ENCODE measurements at regions of chr4 and their contacts with region 1.

Region 1: GRCh38 chr4:176319704-176320339 is at the start of gene SPCS3:
- DNase-seq: peak; percentile 76 to 93
- H3K4me3 ChIP-seq: peak within 1 kb of the TSS; percentile 95
- H3K27ac ChIP-seq: peak within 1 kb of the TSS; percentile 87
- H3K4me1 ChIP-seq: peaks cover 18% of the 10 kb centered on the region
- H3K27me3 ChIP-seq: no peaks in the 10 kb centered on the region
- CTCF ChIP-seq: no peak
- total RNA-seq, gene SPCS3: 107 TPM in 2 replicates

Region 2: GRCh38 chr4:176150356-176150682 is 169.5 kb before region 1 on chr4:
- CTCF ChIA-PET with region 1: no interaction called
- POLR2A ChIA-PET with region 1: no interaction called
- intact Hi-C with region 1: loop called (anchors 5 kb)
- DNase-seq: no peak
- H3K4me3 ChIP-seq: no peak overlapping the region
- H3K27ac ChIP-seq: no peak overlapping the region
- H3K4me1 ChIP-seq: no peaks in the 10 kb centered on the region
- H3K27me3 ChIP-seq: no peaks in the 10 kb centered on the region
- CTCF ChIP-seq: peak; percentile 57

Region 3: GRCh38 chr4:176195184-176195978 is 124.4 kb before region 1 on chr4 and contains the start of gene SPATA4:
- CTCF ChIA-PET with region 1: no interaction called
- POLR2A ChIA-PET with region 1: no interaction called
- intact Hi-C with region 1: loop called (anchors 1 kb)
- DNase-seq: peak; percentile 72 to 90
- H3K4me3 ChIP-seq: peak within 1 kb of the TSS; percentile 69
- H3K27ac ChIP-seq: peak within 1 kb of the TSS; percentile 75
- H3K4me1 ChIP-seq: 0 out of 2 replicates have a peak, but pooled peaks cover 5% of the 10 kb centered on the region
- H3K27me3 ChIP-seq: no peaks in the 10 kb centered on the region
- CTCF ChIP-seq: no peak
- total RNA-seq, gene SPATA4: 0.43 and 1.1 TPM in 2 replicates

Region 4: GRCh38 chr4:176270669-176271068 is 49.2 kb before region 1 on chr4:
- CTCF ChIA-PET with region 1: no interaction called
- POLR2A ChIA-PET with region 1: no interaction called
- intact Hi-C with region 1: loop called (anchors 1 kb)
- DNase-seq: peak; percentile 72 to 93
- H3K4me3 ChIP-seq: no peak overlapping the region
- H3K27ac ChIP-seq: peak overlapping the region; percentile 40
- H3K4me1 ChIP-seq: peaks cover 21% of the 10 kb centered on the region
- H3K27me3 ChIP-seq: no peaks in the 10 kb centered on the region
- CTCF ChIP-seq: no peak

Region 5: DNA sequence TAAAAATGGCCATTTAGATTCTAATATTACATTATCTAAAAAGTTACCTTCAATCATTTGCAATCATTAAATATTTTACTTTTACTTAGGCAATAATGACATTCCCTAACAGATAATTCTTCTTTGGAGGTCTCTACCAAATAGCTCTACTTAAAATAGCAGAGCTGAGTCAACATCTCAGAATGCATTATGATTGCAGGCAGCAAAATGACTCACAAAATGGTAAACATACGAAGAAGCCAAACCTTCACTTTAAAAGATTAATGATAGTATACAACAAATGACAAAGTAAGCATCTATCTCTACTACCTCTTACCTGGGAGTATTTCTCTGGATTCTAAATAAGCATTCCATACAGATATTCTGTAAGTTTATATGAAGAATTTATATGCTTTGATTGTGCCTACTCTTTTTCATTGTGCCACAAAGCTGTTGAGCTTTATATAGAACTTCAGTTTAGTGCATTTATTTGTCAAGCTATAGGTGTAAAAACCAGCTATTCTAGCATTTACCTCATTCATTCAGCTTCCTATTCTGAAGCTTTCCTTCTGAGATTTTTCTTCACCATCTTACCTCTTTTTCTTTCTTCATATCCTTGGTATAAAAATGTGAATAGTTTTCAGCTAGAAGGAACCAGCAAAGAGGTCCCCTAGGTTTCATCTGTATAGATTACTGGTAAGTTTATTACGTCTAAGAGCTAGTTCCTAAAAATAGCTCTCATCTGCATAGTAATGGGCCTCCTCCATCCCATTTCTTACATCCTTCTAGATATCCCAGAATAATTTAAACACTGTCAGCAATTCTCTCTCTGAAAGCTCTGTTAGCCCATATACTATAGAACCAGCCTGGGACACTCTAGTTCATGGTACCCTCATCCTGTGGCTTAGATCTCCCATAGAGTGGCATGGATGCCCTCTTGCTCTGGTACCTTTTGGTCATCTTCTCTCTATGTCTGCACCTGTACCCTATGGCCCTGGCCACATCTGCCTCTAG is 17.2 kb before region 1 on chr4:
- CTCF ChIA-PET with region 1: no interaction called
- POLR2A ChIA-PET with region 1: no interaction called
- intact Hi-C with region 1: no loop called
- DNase-seq: peak in 1 of 2 experiments; percentile 77
- H3K4me3 ChIP-seq: no peak overlapping the region
- H3K27ac ChIP-seq: no peak overlapping the region
- H3K4me1 ChIP-seq: peaks cover 8% of the 10 kb centered on the region
- H3K27me3 ChIP-seq: no peaks in the 10 kb centered on the region
- CTCF ChIP-seq: no peak

Region 6: DNA sequence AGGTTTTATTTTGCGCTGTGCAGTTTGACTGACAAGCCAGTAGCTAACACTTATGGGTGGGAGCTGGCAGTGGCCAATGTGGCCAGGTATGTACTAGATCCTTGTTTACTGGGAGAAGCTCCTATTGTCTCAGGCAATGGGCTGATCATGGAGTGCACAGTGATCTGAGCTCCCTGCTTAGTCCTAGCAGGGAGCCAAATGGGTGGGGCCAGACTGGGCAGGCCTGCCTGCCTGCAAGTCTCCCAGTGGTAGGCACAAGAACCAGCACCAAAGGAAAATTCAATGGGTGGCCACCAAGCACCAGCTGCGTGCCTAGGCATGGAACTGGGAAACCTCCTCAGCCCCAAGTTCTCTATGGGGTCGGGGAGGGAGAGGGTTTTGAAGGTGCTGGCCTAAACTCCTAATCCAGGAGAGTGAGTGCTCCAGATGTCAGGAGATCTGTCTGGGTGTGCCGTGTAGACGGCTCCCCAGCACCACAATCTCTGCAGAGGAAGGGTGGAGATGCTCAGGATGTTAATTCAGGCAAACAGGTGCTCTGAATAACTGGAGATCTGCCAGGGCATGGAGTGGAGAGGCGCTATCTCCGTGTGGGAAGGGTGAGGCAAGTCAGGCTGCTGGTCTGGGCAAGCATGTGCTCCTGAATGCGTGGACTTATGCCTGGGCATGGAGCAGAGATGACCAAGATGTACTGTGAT is 48.1 kb after region 1 on chr4:
- CTCF ChIA-PET with region 1: no interaction called
- POLR2A ChIA-PET with region 1: no interaction called
- intact Hi-C with region 1: no loop called
- DNase-seq: no peak
- H3K4me3 ChIP-seq: no peak overlapping the region
- H3K27ac ChIP-seq: no peak overlapping the region
- H3K4me1 ChIP-seq: no peaks in the 10 kb centered on the region
- H3K27me3 ChIP-seq: no peaks in the 10 kb centered on the region
- CTCF ChIP-seq: no peak

Region 7: GRCh38 chr4:176479767-176480166 is 159.9 kb after region 1 on chr4:
- CTCF ChIA-PET with region 1: no interaction called
- POLR2A ChIA-PET with region 1: no interaction called
- intact Hi-C with region 1: no loop called
- DNase-seq: no peak
- H3K4me3 ChIP-seq: no peak overlapping the region
- H3K27ac ChIP-seq: no peak overlapping the region
- H3K4me1 ChIP-seq: no peaks in the 10 kb centered on the region
- H3K27me3 ChIP-seq: no peaks in the 10 kb centered on the region
- CTCF ChIP-seq: no peak

Region 8: DNA sequence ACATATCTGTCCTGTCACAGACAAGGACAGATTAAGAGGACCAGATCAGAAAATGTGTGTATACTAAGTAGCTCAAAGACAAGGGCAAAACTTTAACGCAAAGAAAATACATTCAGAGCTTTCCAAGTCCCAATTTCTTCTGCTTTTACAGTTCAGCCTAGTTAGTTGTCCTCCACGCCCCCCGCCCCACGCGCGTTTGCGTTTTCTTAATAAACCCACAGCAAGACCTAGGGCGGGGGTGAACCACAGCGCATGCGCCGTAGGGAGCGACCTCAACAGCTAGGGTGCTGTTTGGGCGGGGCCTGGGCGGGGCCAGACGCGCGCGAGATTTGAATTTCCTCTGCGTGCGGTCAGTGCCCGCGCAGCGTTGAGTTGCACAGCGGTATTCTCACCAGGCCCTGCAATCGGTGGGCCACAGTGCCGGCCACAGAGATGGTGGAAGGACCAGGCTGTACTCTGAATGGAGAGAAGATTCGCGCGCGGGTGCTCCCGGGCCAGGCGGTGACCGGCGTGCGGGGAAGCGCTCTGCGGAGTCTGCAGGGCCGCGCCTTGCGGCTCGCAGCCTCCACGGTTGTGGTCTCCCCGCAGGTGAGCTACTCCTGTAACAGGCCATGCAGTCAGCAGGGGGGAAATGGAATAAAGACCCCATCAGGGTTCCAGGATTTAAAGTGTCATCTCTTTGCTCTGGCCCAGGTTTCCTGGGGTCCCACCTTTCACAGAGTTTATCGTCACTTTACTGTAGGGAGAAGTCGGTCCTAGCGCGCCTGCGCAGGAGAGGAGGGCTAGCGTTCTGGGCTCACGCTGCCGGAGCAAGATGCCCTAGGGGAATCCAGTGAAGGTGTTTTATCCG is 989.9 kb after region 1 on chr4 and contains the start of gene NEIL3:
- CTCF ChIA-PET with region 1: no interaction called
- POLR2A ChIA-PET with region 1: interaction called, 10 read pairs
- intact Hi-C with region 1: no loop called
- DNase-seq: peak; percentile 67 to 81
- H3K4me3 ChIP-seq: peak within 1 kb of the TSS; percentile 90
- H3K27ac ChIP-seq: no peak within 1 kb of the TSS
- H3K4me1 ChIP-seq: 0 out of 2 replicates have a peak, but pooled peaks cover 6% of the 10 kb centered on the region
- H3K27me3 ChIP-seq: no peaks in the 10 kb centered on the region
- CTCF ChIP-seq: no peak
- total RNA-seq, gene NEIL3: 15.0 and 16.2 TPM in 2 replicates